ENCODE measurements at regions of chr20 and their contacts with region 1.

Region 1: DNA sequence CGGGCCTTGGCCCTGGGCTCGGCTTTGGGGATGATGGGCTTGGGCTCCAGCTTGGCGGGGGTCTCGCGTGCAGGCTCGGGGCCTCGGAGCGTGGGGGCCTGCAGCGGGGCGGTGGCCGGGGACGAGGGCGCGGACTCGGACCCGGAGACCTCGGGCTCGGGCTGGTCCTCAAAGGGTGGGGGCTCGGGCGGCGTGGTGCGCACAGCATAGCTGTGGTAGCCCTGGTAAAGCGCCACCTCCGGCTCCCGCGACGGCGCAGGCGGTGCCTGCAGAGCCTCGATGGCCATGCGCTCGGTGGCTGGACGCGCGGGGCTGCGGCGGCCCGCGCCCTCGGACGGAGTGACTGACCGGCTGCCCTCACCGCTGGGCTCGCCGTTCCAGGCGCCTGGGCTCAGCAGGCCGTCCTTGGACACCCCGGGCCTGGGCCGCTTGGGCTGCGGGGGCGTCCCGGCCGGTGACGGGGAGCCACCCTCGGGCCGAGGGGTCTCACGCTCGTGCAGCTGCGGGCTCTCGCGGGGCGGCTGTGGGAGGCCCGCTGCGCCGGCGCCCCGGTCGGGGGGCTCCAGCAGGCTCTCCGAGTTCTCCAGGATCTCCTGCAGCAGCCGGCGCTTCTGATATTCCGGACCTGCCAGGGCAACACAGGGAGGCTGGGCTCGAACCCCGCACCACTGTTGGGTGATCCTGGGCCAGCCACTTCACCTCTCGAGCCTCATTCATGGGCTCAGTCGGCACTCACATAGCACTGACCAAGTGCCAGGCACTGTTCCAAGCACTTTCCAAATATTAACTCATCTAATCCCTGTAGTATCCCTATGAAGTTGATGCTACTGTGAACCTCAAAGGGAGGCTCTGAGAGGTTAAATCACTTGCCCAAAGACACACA is 71.0 kb downstream of the JPH2 start:
- DNase-seq: no peak
- H3K4me3 ChIP-seq: no peak overlapping the region
- H3K27ac ChIP-seq: no peak overlapping the region
- H3K4me1 ChIP-seq: no peaks in the 10 kb centered on the region
- H3K27me3 ChIP-seq: no peaks in the 10 kb centered on the region

Region 2: DNA sequence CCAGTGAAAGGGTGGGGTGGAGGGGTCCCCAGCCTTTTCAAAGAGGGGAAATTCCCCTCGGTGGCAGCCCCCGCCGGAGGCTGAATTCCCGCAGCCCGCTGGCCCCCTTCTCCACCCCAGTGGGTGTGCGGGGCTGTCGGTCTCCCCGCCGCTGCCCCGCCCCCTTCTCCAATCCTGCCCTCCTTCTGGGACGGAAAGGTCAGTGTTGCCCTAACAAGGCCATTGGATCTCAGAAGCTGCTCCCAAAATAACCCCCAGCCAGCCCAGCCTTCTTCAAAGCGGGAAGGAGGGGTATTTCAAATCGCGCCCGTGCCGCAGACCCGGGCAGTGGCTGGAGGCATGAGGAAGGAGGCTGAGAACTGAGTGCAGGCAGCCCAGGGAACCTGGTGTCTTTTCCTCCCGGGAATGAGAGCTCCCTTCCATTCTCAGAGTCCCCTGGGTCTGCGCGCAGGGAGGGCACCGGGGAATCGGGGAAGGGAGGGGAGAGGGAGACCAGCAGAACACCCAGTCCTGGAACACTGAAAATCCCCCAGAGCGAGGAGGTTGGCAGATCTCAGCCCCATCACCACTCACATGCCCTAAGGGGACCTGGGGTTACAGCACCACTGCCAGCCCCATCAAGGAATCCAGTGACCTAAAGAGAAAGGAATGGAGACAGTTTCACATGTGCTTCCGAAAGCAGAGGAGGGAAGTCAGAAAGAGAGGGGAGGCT is 71.2 kb after region 1 on chr20 and contains the start of gene JPH2:
- in situ Hi-C with region 1: loop called (anchors 5 kb)
- DNase-seq: peak; percentile 89
- H3K4me3 ChIP-seq: peak within 1 kb of the TSS; percentile 79
- H3K27ac ChIP-seq: peak within 1 kb of the TSS; percentile 88
- H3K4me1 ChIP-seq: peaks cover 13% of the 10 kb centered on the region
- H3K27me3 ChIP-seq: no peaks in the 10 kb centered on the region
- total RNA-seq, gene JPH2: 7.8 and 9.7 TPM in 2 replicates